ENCODE measurements at regions of chr3 and their contacts with region 1.

Region 1: DNA sequence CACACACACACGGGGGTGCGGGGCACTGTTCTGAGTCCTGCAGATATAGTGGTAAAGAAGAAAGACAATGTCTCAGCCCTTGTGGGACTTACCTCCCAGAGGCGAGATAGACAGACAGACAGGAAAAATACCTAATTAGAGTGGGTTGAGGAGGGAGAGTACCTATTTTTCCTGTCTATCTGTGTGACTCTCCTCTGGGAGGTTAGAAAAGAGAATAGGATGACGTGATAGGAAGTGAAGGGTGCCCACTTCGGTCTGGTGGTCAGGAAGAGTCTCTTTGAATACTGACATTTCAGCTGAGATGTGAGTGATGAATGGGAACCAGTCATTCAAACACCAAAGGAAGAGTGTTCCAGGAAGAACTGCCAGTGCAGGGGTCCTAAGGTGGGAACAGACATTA is 4.1 kb upstream of the APOD start:
- DNase-seq: peak; percentile 33
- H3K4me3 Mint-ChIP-seq: no peak overlapping the region
- H3K27ac Mint-ChIP-seq: no peak overlapping the region
- H3K4me1 Mint-ChIP-seq: peaks cover 5% of the 10 kb centered on the region
- H3K27me3 Mint-ChIP-seq: peaks cover 2% of the 10 kb centered on the region

Region 2: GRCh38 chr3:195442573-195443390 is 145.0 kb before region 1 on chr3 and contains the start of gene ACAP2:
- CTCF ChIA-PET with region 1: no interaction called
- POLR2A ChIA-PET with region 1: no interaction called
- intact Hi-C with region 1: loop called (anchors 5 kb)
- DNase-seq: peak; percentile 99
- H3K4me3 Mint-ChIP-seq: peak within 1 kb of the TSS; percentile 92
- H3K27ac Mint-ChIP-seq: peak within 1 kb of the TSS; percentile 91
- H3K4me1 Mint-ChIP-seq: peaks cover 39% of the 10 kb centered on the region
- H3K27me3 Mint-ChIP-seq: no peaks in the 10 kb centered on the region
- total RNA-seq, gene ACAP2: 45.0 to 47.0 TPM

Region 3: GRCh38 chr3:195549931-195550519 is 37.8 kb before region 1 on chr3:
- CTCF ChIA-PET with region 1: no interaction called
- POLR2A ChIA-PET with region 1: no interaction called
- intact Hi-C with region 1: loop called (anchors 2 kb)
- DNase-seq: peak; percentile 87
- H3K4me3 Mint-ChIP-seq: peak overlapping the region; percentile 68
- H3K27ac Mint-ChIP-seq: peak overlapping the region; percentile 87
- H3K4me1 Mint-ChIP-seq: peaks cover 81% of the 10 kb centered on the region
- H3K27me3 Mint-ChIP-seq: no peaks in the 10 kb centered on the region

Region 4: GRCh38 chr3:195609229-195609628 is 21.4 kb after region 1 on chr3:
- CTCF ChIA-PET with region 1: no interaction called
- POLR2A ChIA-PET with region 1: interaction called, 3 read pairs
- intact Hi-C with region 1: loop called (anchors 1 kb)
- DNase-seq: peak; percentile 66
- H3K4me3 Mint-ChIP-seq: no peak overlapping the region
- H3K27ac Mint-ChIP-seq: peak overlapping the region; percentile 70
- H3K4me1 Mint-ChIP-seq: peaks cover 31% of the 10 kb centered on the region
- H3K27me3 Mint-ChIP-seq: no peaks in the 10 kb centered on the region